ENCODE measurements at regions of chr3 and their contacts with region 1.

Region 1: GRCh38 chr3:49553692-49554632 is at the start of gene BSN:
- DNase-seq: peak; percentile 71 to 93 (median 84)
- ATAC-seq: peak; percentile 88
- H3K4me3 ChIP-seq: peak within 1 kb of the TSS; percentile 59
- H3K4me3 Mint-ChIP-seq: peak within 1 kb of the TSS; percentile 90
- H3K27ac ChIP-seq: no peak within 1 kb of the TSS
- H3K27ac Mint-ChIP-seq: no peak within 1 kb of the TSS
- H3K4me1 ChIP-seq: peaks cover 26% of the 10 kb centered on the region
- H3K4me1 Mint-ChIP-seq: peaks cover 18% of the 10 kb centered on the region
- H3K27me3 ChIP-seq: peaks cover 36 to 39% of the 10 kb centered on the region in 2 experiments
- H3K27me3 Mint-ChIP-seq: peaks cover 80% of the 10 kb centered on the region
- CTCF ChIP-seq: no peak
- total RNA-seq, gene BSN: 0.08 to 0.11 TPM

Region 2: GRCh38 chr3:49539659-49540560 is 14.1 kb before region 1 on chr3:
- CTCF ChIA-PET with region 1: interaction called, 32 read pairs
- POLR2A ChIA-PET with region 1: interaction called, 8 read pairs
- intact Hi-C with region 1: no loop called
- DNase-seq: peak; percentile 81 to 96 (median 92)
- ATAC-seq: peak; percentile 97
- H3K4me3 ChIP-seq: peak overlapping the region; percentile 61
- H3K4me3 Mint-ChIP-seq: peak overlapping the region; percentile 86
- H3K27ac ChIP-seq: peak overlapping the region; percentile 41 to 53
- H3K27ac Mint-ChIP-seq: peak overlapping the region; percentile 63
- H3K4me1 ChIP-seq: peaks cover 11% of the 10 kb centered on the region
- H3K4me1 Mint-ChIP-seq: no peaks in the 10 kb centered on the region
- H3K27me3 ChIP-seq: no peaks in the 10 kb centered on the region
- H3K27me3 Mint-ChIP-seq: peaks cover 12% of the 10 kb centered on the region
- CTCF ChIP-seq: peak; percentile 91

Region 3: DNA sequence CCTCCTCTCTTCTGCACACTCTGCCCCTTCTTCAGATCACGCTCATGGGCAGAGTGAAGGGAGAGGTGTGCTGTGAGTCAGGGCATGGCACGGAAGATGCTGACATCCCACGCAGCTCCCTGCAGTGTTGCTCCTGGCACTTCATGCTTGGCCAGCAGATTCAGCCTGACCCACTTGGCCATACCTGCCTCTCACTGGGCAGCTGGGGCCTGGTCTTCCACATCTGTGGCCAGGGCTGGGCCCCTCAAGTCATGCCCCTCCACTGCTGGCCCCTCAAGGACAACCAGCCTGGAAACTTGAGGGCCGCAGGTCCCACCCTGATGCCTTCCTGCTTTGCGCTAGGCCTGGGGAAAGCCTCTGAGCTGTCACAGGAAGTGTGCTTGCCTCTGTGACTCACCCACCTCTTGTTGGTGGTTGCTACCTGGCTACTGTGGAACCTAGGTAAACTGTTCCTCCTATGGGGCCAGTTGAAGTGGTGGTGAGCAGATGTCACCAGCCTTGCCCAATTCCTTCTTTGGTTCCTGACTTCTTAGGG is 49.0 kb after region 1 on chr3:
- CTCF ChIA-PET with region 1: no interaction called
- POLR2A ChIA-PET with region 1: no interaction called
- intact Hi-C with region 1: loop called in 1 of 2 experiments (anchors 2 kb)
- DNase-seq: peak; percentile 33 to 80 (median 54)
- ATAC-seq: peak; percentile 96
- H3K4me3 ChIP-seq: no peak overlapping the region
- H3K4me3 Mint-ChIP-seq: no peak overlapping the region
- H3K27ac ChIP-seq: peak overlapping the region in 1 of 2 donors; percentile 55
- H3K27ac Mint-ChIP-seq: peak overlapping the region; percentile 55
- H3K4me1 ChIP-seq: peaks cover 13% of the 10 kb centered on the region
- H3K4me1 Mint-ChIP-seq: peaks cover 19% of the 10 kb centered on the region
- H3K27me3 ChIP-seq: no peaks in the 10 kb centered on the region
- H3K27me3 Mint-ChIP-seq: no peaks in the 10 kb centered on the region
- CTCF ChIP-seq: no peak